ENCODE measurements at regions of chr14 and their contacts with region 1.

Region 1: DNA sequence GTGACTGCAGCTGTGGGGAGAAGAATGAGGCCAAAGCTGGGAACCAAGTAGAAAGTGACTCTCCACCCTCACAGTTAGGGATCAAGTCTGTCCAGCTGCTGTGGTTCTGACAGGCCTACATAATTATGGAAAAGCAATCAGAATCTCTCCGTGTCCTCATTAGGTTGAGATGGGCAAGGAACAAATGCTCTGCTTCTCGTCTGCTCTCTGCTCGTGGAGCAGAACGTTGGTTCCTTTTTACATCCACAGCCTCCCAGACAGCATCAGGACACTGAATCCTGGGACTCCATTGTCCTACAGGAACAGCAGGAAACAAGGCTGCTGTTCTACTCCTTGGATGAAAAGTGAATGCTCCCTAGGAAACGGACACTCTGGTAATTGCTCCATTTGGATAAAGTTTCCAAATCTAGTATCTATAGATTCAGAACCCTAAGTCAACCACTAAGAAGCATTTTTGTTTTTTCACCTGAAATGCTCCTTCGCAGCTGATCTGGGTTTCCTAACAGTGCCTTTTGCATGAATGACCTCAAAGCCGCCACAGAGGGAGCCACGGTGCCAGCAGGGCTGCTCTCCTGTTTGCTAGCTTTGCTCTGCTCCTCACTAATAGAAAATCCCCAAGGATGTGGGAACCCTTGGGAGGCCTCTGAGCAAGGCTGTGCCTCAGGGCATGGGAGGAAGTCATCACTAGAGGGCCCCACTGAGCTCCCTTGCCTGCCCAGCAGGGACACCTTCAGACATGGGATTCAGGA is 102.0 kb downstream of the EGLN3 start:
- DNase-seq: peak; percentile 86 to 89
- H3K4me3 ChIP-seq: no peak overlapping the region
- H3K27ac ChIP-seq: no peak overlapping the region
- H3K4me1 ChIP-seq: peaks cover 4 to 8% (median 6%) of the 10 kb centered on the region in 4 experiments; a peak in 5 of 7 replicates
- H3K27me3 ChIP-seq: no peaks in the 10 kb centered on the region
- CTCF ChIP-seq: peak; percentile 77 to 95 (median 94)
- EP300 ChIP-seq: no peak
- POLR2A ChIP-seq: no peak
- RAD21 ChIP-seq: peak; percentile 80 to 89

Region 2: DNA sequence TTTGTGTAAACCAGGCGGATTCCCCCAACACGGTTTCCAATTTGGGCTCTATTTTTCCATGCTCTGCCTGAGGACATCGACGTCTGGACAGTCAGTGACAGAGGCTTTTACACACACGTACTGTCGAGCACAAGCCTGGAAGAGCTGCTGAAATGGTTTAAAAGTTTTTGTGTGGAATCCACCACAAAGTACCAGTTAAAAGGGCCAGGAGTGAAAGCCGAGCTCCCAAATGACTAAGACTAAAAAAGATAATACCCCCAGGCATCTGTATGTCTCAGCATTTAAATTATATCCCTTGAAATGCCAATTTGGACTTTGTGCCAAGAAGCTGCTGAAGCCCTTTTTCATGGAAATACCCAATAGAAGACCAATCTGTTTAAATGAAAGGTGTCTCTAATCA is 71.2 kb before region 1 on chr14:
- CTCF ChIA-PET with region 1: no interaction called
- POLR2A ChIA-PET with region 1: no interaction called
- DNase-seq: no peak
- H3K4me3 ChIP-seq: no peak overlapping the region
- H3K27ac ChIP-seq: no peak overlapping the region
- H3K4me1 ChIP-seq: peaks cover 0 to 11% (median 0%) of the 10 kb centered on the region in 4 experiments; a peak in 2 of 7 replicates
- H3K27me3 ChIP-seq: no peaks in the 10 kb centered on the region
- CTCF ChIP-seq: no peak
- EP300 ChIP-seq: no peak
- POLR2A ChIP-seq: no peak
- RAD21 ChIP-seq: no peak

Region 3: DNA sequence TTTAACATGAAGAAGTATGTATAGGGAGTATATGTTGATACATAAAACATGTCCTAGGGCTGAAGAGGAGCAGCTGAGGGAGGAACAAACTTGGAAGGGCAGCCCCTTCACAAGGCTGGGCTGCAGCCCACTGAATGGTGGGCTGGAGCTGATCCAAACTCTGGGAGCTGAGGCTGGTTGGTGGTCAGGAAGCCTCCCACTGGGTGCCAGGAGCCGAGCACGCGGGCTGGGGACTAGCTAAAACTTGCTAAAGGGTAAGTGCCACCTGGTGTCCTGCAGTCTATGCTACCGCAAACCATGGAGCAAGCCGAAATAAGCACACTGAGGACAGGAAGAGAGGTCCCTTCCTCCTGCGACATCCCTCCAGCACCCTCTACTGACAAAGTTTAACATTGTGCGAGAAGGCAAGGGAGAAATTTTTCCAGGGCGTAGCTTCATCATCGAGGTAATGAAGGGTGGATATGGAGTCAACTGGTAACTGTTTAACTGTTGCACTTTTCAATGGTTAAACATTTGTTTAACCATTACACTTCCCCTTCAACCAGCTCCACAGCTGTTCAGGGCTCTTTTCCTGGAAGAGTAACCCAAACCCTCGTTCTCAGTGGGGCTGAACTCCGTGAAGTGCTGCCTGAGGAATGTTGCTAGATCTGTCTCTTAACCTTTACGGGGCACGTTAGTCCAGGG is 59.8 kb after region 1 on chr14:
- CTCF ChIA-PET with region 1: interaction called, 42 read pairs
- POLR2A ChIA-PET with region 1: no interaction called
- DNase-seq: no peak
- H3K4me3 ChIP-seq: no peak overlapping the region
- H3K27ac ChIP-seq: no peak overlapping the region
- H3K4me1 ChIP-seq: no peaks in the 10 kb centered on the region; a peak in 1 of 7 replicates
- H3K27me3 ChIP-seq: no peaks in the 10 kb centered on the region
- CTCF ChIP-seq: peak; percentile 48 to 62 (median 52)
- EP300 ChIP-seq: no peak
- POLR2A ChIP-seq: no peak
- RAD21 ChIP-seq: peak; percentile 65

Region 4: DNA sequence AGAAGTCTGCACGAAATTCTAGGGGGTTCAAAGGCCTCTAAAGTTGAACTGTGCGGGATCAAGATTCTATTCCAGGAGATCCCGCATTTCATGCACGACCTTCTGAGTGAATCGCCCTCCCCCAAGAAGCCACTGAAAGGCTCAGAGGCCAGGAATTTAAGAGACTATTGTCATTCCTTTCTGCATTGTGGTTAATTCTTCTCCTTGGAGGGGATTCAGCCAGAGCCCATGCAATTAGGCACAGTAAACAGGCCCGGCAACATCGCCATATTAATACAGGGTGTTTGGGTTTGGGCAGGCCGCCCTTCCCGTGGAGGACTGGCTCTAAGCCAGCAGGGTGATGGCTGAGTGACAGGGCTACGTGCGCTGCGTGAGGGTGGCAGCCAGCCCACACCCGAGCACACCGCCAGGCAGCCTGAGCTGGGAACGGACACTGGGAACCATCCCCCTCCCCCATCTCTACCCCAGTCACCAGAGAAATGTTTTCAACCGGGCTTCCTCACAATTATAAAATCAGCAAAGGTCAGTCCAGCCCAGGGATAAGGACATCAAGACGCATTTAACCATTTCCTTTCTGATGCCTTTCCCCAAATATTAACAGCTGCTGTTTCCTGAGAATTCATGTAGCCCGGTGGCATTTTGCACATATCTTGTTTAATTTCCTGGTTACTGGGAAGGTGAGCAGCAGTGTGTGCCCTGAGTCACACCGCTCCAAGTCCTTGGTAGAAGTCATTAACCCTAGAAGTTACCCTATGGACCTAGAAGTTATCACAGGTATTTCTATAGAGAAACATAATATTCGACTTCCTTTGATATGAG is 89.5 kb after region 1 on chr14:
- CTCF ChIA-PET with region 1: interaction called, 12 read pairs
- POLR2A ChIA-PET with region 1: interaction called, 4 read pairs
- DNase-seq: peak in 1 of 2 experiments; percentile 58
- H3K4me3 ChIP-seq: peak overlapping the region in 3 of 4 experiments; percentile 1 to 47 (median 21); a peak in 5 of 8 replicates
- H3K27ac ChIP-seq: peak overlapping the region; percentile 83
- H3K4me1 ChIP-seq: peaks cover 23 to 50% (median 30%) of the 10 kb centered on the region in 4 experiments
- H3K27me3 ChIP-seq: no peaks in the 10 kb centered on the region
- CTCF ChIP-seq: no peak
- EP300 ChIP-seq: no peak
- POLR2A ChIP-seq: peak in 1 of 2 experiments; percentile 42; a peak in 1 of 3 replicates
- RAD21 ChIP-seq: no peak

Region 5: DNA sequence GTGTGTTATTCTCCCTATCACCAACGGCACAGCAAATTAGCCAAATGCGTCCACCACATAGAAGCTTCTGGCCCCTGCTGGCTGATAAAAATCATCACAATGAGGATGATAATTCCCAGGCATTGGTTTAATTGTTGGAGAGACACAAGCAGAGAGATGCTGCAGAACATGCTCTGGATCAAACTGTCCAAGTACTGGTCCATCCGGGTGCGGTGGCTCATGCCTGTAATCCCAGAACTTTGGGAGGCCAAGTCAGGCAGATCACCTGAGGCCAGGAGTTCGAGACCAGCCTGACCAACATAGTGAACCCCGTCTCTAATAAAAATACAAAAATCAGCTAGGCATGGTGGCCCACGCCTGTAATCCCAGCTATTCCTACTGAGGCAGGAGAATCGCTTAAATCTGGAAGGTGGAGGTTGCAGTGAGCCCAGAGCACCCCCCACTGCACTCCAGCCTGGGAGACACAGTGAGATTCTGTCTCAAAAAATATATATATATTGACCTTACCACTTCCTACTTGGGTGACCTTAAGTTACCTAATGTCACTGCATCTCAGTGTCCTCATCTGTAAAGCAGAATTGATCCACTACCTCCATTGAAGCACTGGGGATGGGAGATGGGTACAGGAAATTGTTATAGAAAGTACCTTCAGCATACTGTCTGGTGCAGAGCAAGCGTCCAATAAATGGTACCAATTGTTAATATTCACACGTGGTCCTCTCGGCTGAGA is 185.7 kb after region 1 on chr14:
- CTCF ChIA-PET with region 1: interaction called, 10 read pairs
- POLR2A ChIA-PET with region 1: no interaction called
- DNase-seq: no peak
- H3K4me3 ChIP-seq: no peak overlapping the region
- H3K27ac ChIP-seq: no peak overlapping the region
- H3K4me1 ChIP-seq: peaks cover 0 to 2% (median 1%) of the 10 kb centered on the region in 4 experiments; a peak in 3 of 7 replicates
- H3K27me3 ChIP-seq: no peaks in the 10 kb centered on the region
- CTCF ChIP-seq: no peak
- EP300 ChIP-seq: no peak
- POLR2A ChIP-seq: no peak
- RAD21 ChIP-seq: no peak; a peak in 1 of 4 replicates

Region 6: GRCh38 chr14:34098045-34098984 is 249.4 kb after region 1 on chr14:
- CTCF ChIA-PET with region 1: interaction called, 88 read pairs
- POLR2A ChIA-PET with region 1: interaction called, 3 read pairs
- DNase-seq: peak in 1 of 2 experiments; percentile 47
- H3K4me3 ChIP-seq: no peak overlapping the region
- H3K27ac ChIP-seq: no peak overlapping the region
- H3K4me1 ChIP-seq: no peaks in the 10 kb centered on the region
- H3K27me3 ChIP-seq: no peaks in the 10 kb centered on the region
- CTCF ChIP-seq: peak in 2 of 3 experiments; percentile 56 to 69; a peak in 3 of 4 replicates
- EP300 ChIP-seq: no peak
- POLR2A ChIP-seq: no peak
- RAD21 ChIP-seq: peak; percentile 83 to 89

Measured in H1 (cell line).